H1 (cell line): ENCODE measurements at regions of chr7 and their contacts with region 1.

Region 1: GRCh38 chr7:149872419-149873073 is 1.2 kb upstream of the ATP6V0E2 start:
- DNase-seq: peak in 1 of 2 experiments; percentile 55
- H3K4me3 ChIP-seq: peak overlapping the region; percentile 48 to 71 (median 62); a peak in 7 of 8 replicates
- H3K27ac ChIP-seq: no peak overlapping the region
- H3K4me1 ChIP-seq: peaks cover 0 to 12% (median 4%) of the 10 kb centered on the region in 4 experiments; a peak in 4 of 7 replicates
- H3K27me3 ChIP-seq: peaks cover 0 to 22% (median 14%) of the 10 kb centered on the region in 4 experiments; a peak in 6 of 7 replicates
- CTCF ChIP-seq: peak in 1 of 3 experiments; percentile 9; a peak in 1 of 4 replicates
- EP300 ChIP-seq: no peak
- POLR2A ChIP-seq: no peak
- RAD21 ChIP-seq: peak; percentile 3 to 8; a peak in 1 of 4 replicates

Region 2: DNA sequence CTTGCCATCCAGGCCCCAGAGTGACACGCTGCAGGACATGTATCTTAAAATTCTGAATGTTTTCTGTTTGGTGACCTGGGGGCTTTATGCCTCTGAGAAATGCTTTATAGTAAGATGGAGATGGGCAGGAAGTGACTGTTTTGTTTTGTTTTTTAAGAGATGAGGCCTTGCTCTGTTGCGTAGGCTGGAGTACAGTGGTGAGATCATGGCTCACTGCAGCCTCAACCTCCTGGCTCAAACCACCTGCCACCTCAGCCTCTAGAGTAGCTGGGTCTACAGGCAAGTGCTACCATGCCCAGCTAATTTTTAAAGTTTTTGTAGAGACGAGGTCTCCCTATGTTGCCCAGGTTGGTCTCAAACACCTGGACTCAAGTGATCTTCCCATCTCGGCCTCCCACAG is 432.3 kb before region 1 on chr7:
- CTCF ChIA-PET with region 1: no interaction called
- POLR2A ChIA-PET with region 1: no interaction called
- DNase-seq: peak in 1 of 2 experiments; percentile 1
- H3K4me3 ChIP-seq: no peak overlapping the region
- H3K27ac ChIP-seq: no peak overlapping the region
- H3K4me1 ChIP-seq: no peaks in the 10 kb centered on the region
- H3K27me3 ChIP-seq: no peaks in the 10 kb centered on the region
- CTCF ChIP-seq: no peak
- EP300 ChIP-seq: no peak
- POLR2A ChIP-seq: no peak
- RAD21 ChIP-seq: no peak

Region 3: GRCh38 chr7:149586646-149587332 is 285.8 kb before region 1 on chr7:
- CTCF ChIA-PET with region 1: no interaction called
- POLR2A ChIA-PET with region 1: no interaction called
- DNase-seq: peak in 1 of 2 experiments; percentile 14
- H3K4me3 ChIP-seq: no peak overlapping the region
- H3K27ac ChIP-seq: no peak overlapping the region
- H3K4me1 ChIP-seq: no peaks in the 10 kb centered on the region
- H3K27me3 ChIP-seq: no peaks in the 10 kb centered on the region
- CTCF ChIP-seq: no peak
- EP300 ChIP-seq: no peak
- POLR2A ChIP-seq: no peak
- RAD21 ChIP-seq: no peak

Region 4: DNA sequence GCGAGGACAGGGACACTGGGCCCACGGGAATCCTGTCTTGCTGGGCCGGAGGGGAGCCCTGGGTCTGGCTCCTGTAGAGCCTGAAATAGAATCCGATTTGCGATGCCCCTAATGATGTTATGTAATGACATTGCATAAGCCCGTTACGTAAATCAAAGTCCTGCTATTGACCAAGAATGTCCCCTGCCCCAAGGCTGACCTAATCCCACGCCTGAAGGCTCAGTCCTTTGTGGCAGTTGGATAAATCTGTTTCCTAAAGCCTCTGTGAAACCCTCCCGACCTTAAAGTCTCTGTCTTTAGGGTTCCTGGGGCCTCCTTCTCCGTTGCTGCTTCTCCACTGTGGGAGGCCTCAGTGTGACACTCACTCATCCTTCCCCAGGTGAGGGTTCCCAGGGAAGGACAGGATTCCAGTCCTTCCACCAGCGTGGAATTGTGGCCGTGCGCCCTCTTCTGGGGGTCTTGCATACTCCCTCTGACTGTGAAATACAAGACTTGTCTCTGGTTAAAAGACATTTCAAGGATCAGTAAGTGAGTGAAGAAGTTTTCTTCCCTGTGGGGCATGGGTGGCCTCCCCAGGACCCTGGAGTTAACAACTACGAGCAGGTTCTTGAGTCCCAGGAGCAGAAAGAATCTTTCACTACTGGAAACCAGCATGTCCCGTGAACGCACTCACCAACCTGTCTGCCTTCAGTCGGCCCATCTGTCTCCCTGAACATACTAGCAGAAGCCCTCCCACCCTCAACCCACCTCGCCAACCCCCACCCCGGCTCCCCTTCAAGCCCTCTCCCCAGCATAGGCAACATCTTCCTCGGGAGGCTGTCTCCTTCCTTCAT is 118.9 kb before region 1 on chr7:
- CTCF ChIA-PET with region 1: no interaction called
- POLR2A ChIA-PET with region 1: no interaction called
- DNase-seq: peak in 1 of 2 experiments; percentile 83
- H3K4me3 ChIP-seq: no peak overlapping the region
- H3K27ac ChIP-seq: no peak overlapping the region
- H3K4me1 ChIP-seq: no peaks in the 10 kb centered on the region
- H3K27me3 ChIP-seq: no peaks in the 10 kb centered on the region; a peak in 1 of 7 replicates
- CTCF ChIP-seq: peak; percentile 66 to 81 (median 75)
- EP300 ChIP-seq: no peak
- POLR2A ChIP-seq: no peak
- RAD21 ChIP-seq: peak; percentile 62 to 73

Region 5: GRCh38 chr7:149822353-149822943 is 50.1 kb before region 1 on chr7:
- CTCF ChIA-PET with region 1: no interaction called
- POLR2A ChIA-PET with region 1: no interaction called
- DNase-seq: no peak
- H3K4me3 ChIP-seq: no peak overlapping the region
- H3K27ac ChIP-seq: no peak overlapping the region
- H3K4me1 ChIP-seq: no peaks in the 10 kb centered on the region; a peak in 1 of 7 replicates
- H3K27me3 ChIP-seq: no peaks in the 10 kb centered on the region
- CTCF ChIP-seq: no peak
- EP300 ChIP-seq: no peak
- POLR2A ChIP-seq: no peak
- RAD21 ChIP-seq: no peak

Region 6: GRCh38 chr7:149854611-149855360 is 17.8 kb before region 1 on chr7:
- CTCF ChIA-PET with region 1: interaction called, 60 read pairs
- POLR2A ChIA-PET with region 1: interaction called, 3 read pairs
- DNase-seq: peak in 1 of 2 experiments; percentile 62
- H3K4me3 ChIP-seq: peak overlapping the region in 2 of 4 experiments; percentile 1 to 27; a peak in 1 of 8 replicates
- H3K27ac ChIP-seq: no peak overlapping the region
- H3K4me1 ChIP-seq: peaks cover 6 to 17% (median 11%) of the 10 kb centered on the region in 4 experiments
- H3K27me3 ChIP-seq: no peaks in the 10 kb centered on the region
- CTCF ChIP-seq: no peak
- EP300 ChIP-seq: no peak
- POLR2A ChIP-seq: no peak
- RAD21 ChIP-seq: no peak

Region 7: GRCh38 chr7:149861446-149862045 is 11.0 kb before region 1 on chr7:
- CTCF ChIA-PET with region 1: interaction called, 60 read pairs
- POLR2A ChIA-PET with region 1: interaction called, 5 read pairs
- DNase-seq: peak in 1 of 2 experiments; percentile 89
- H3K4me3 ChIP-seq: no peak overlapping the region
- H3K27ac ChIP-seq: no peak overlapping the region
- H3K4me1 ChIP-seq: no peaks in the 10 kb centered on the region
- H3K27me3 ChIP-seq: no peaks in the 10 kb centered on the region; a peak in 2 of 7 replicates
- CTCF ChIP-seq: peak; percentile 98 to 100 (median 99)
- EP300 ChIP-seq: no peak
- POLR2A ChIP-seq: no peak
- RAD21 ChIP-seq: peak; percentile 87 to 94

Region 8: DNA sequence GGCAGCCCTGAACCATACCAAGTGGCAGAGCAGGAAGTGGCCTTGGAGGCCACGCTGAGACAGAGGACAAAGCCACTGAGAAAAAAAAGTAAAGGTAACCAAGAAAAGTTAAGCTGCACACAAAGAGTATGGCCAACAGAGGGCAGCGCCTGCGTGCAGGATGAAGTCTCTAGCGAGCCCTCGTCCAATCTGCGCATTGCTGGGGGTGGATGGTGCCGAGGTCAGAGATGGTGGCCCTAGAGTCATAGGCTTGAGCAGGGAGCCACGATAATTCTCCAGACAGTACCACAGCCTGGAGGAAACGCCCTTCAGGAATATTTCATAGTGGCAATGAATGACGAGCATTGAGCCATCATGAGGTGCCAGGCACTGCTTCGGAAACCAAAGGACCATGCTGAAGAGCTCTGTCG is 10.9 kb after region 1 on chr7:
- CTCF ChIA-PET with region 1: interaction called, 34 read pairs
- POLR2A ChIA-PET with region 1: interaction called, 5 read pairs
- DNase-seq: peak; percentile 29 to 77
- H3K4me3 ChIP-seq: no peak overlapping the region
- H3K27ac ChIP-seq: no peak overlapping the region
- H3K4me1 ChIP-seq: peaks cover 5 to 9% (median 5%) of the 10 kb centered on the region in 4 experiments; a peak in 6 of 7 replicates
- H3K27me3 ChIP-seq: no peaks in the 10 kb centered on the region
- CTCF ChIP-seq: peak; percentile 74 to 91 (median 88)
- EP300 ChIP-seq: no peak
- POLR2A ChIP-seq: no peak
- RAD21 ChIP-seq: peak; percentile 93 to 95